ENCODE measurements at regions of chr19 and their contacts with region 1.

Region 1: DNA sequence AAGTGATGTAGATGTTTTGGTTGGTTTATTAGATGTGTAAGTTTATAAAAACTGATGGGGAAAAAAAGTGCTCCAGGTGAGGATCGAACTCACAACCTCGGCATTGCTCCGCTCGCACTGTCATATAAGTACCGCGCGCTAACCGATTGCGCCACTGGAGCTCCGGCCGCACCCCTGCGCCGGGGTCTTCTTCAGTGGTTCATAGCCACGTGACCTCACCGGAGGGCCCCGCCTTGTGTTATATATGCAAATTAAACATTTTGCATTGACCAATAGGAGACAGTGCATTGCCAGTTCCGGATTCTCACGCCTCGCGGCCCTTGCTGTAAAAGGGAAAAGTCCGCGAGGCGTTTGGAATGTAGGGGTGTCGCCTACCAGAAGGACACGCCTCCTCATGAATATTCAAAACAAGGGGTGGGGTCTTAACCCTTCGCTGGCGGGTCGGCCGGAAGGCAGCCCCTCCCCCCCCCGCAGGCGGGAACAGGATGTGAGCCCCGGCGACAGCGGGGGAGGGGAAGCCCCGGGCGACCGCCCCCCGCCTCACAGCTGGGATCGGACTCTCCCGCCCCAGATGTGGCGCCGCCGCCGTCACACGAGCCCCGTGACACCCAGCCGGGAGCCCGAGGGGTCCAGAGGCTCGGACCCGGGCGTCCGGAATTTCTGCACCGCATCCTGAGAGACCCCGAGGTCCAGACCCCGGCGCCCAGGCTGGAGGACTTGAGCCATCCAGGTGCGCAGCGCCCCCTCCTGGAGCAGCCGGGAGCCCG is at the start of gene PLEKHG2:
- DNase-seq: peak; percentile 95
- H3K4me3 ChIP-seq: peak within 1 kb of the TSS; percentile 92 to 96
- H3K27ac ChIP-seq: peak within 1 kb of the TSS; percentile 94 to 96
- H3K4me1 ChIP-seq: peaks cover 29 to 44% of the 10 kb centered on the region in 2 experiments; a peak in 3 of 4 replicates
- H3K27me3 ChIP-seq: no peaks in the 10 kb centered on the region
- CTCF ChIP-seq: peak; percentile 88
- EP300 ChIP-seq: 0 out of 4 replicates have a peak, but pooled peaks of 1 of the 2 experiments have one; percentile 42
- RAD21 ChIP-seq: peak; percentile 27; the same call in 1 of the 2 replicates
- polyA plus RNA-seq, gene PLEKHG2: 13.6 and 13.8 TPM in 2 replicates

Region 2: GRCh38 chr19:39264306-39265290 is 147.7 kb before region 1 on chr19:
- CTCF ChIA-PET with region 1: no interaction called
- POLR2A ChIA-PET with region 1: no interaction called
- DNase-seq: no peak
- H3K4me3 ChIP-seq: no peak overlapping the region
- H3K27ac ChIP-seq: no peak overlapping the region
- H3K4me1 ChIP-seq: no peaks in the 10 kb centered on the region
- H3K27me3 ChIP-seq: peaks cover 10% of the 10 kb centered on the region; the same call in 1 of the 2 replicates
- CTCF ChIP-seq: no peak
- EP300 ChIP-seq: no peak
- RAD21 ChIP-seq: no peak

Region 3: GRCh38 chr19:39282021-39282420 is 130.3 kb before region 1 on chr19:
- CTCF ChIA-PET with region 1: no interaction called
- POLR2A ChIA-PET with region 1: no interaction called
- DNase-seq: no peak
- H3K4me3 ChIP-seq: no peak overlapping the region
- H3K27ac ChIP-seq: no peak overlapping the region
- H3K4me1 ChIP-seq: no peaks in the 10 kb centered on the region
- H3K27me3 ChIP-seq: no peaks in the 10 kb centered on the region
- CTCF ChIP-seq: no peak
- EP300 ChIP-seq: no peak
- RAD21 ChIP-seq: no peak

Region 4: DNA sequence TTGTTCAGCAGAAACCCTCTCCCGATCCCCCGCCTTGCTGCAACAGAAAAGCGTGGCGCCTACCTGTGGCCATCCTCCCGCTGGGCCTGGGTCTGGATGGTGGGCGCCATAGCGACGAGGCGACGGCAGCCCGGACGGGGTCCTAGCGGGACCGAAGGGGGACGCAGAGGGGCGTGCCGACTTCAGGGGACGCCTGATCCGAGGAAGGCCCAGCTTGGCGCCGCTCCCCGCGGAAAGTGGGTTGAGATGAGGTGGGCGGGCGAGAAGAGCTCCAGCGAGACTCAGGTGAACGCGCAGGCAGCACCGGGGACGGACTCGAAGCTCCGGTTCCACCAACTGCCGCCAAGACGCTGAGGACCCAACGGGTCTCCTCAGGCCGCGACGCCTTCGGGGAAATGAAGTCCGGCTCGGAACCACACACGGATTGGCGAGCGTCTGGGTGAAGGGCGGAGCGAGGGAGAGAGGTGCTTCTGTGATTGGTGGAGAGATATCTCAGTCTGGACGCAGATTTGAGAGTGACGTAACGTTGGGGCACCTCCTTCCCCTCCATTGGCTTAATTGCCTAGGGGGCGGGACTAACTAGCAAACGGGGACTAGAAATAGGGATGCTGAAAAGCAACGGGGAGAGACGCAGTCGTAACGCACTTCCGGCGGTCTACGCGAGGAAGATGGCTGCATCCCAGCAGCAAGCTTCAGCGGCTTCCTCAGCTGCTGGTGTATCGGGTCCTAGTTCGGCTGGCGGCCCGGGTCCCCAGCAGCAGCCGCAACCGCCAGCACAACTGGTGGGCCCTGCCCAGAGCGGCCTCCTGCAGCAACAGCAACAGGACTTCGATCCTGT is 21.3 kb before region 1 on chr19 and contains the starts of genes MED29 and PAF1:
- CTCF ChIA-PET with region 1: interaction called, 53 read pairs
- POLR2A ChIA-PET with region 1: interaction called, 6 read pairs
- DNase-seq: peak; percentile 97
- H3K4me3 ChIP-seq: peak within 1 kb of the TSS; percentile 96 to 98
- H3K27ac ChIP-seq: peak within 1 kb of the TSS; percentile 86 to 97
- H3K4me1 ChIP-seq: peaks cover 5 to 17% of the 10 kb centered on the region in 2 experiments; a peak in 2 of 4 replicates
- H3K27me3 ChIP-seq: no peaks in the 10 kb centered on the region
- CTCF ChIP-seq: no peak
- EP300 ChIP-seq: no peak
- RAD21 ChIP-seq: no peak
- polyA plus RNA-seq, gene MED29: 32.0 and 33.1 TPM in 2 replicates
- polyA plus RNA-seq, gene PAF1: 57.6 and 65.3 TPM in 2 replicates

Region 5: DNA sequence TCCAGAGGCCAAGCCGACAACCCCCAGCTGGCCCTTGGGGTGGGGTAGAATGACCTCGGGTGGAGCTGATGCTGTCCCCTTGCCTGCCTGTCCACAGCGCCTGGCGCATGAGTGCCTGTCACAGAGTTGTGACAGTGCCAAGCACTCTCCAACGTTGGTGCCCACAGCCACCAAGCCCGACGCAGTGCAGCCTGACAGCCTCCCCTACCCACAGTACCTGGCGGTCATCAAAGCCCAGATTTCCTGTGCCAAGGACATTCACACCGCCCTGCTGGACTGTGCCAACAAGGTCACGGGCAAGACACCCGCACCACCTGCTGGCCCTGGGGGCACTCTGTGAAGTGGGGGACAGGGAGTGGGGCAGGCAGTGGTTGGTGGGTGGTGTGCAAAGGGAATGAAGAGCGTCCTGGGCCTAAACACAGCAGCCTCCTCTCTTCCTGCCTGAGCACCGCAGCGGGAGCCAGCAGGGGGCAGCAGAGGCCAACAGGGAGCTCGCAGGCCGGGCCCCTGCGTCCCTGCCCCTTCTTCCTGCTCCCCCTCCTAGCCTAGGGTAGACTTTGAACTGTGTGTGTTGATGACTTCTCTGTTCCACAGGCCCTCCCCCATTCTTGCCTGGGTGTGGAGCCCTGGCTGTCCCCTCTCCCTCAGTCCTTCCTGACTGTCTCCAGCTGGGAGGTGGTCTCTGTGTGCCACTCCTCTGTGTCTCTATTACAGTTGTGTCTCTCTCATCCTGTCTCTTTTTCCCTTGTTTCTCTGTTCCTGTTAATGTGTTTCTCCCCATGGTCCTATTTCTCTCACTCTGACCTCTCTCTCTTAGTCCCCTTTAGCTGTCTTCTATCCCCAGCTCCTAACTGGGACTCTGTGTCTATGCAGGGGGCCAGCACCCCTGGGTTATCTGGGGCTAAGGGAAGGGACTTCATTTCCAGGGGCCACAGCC is 14.7 kb before region 1 on chr19:
- CTCF ChIA-PET with region 1: interaction called, 106 read pairs
- POLR2A ChIA-PET with region 1: interaction called, 4 read pairs
- DNase-seq: peak; percentile 92
- H3K4me3 ChIP-seq: peak overlapping the region in 1 of 2 experiments; percentile 35; a peak in 1 of 4 replicates
- H3K27ac ChIP-seq: peak overlapping the region in 1 of 2 experiments; percentile 77; a peak in 3 of 4 replicates
- H3K4me1 ChIP-seq: peaks cover 12 to 24% of the 10 kb centered on the region in 2 experiments; a peak in 3 of 4 replicates
- H3K27me3 ChIP-seq: no peaks in the 10 kb centered on the region
- CTCF ChIP-seq: peak; percentile 91
- EP300 ChIP-seq: no peak
- RAD21 ChIP-seq: peak; percentile 90

Region 6: GRCh38 chr19:39428283-39429112 is 16.2 kb after region 1 on chr19:
- CTCF ChIA-PET with region 1: interaction called, 18 read pairs
- POLR2A ChIA-PET with region 1: interaction called, 5 read pairs
- DNase-seq: no peak
- H3K4me3 ChIP-seq: no peak overlapping the region
- H3K27ac ChIP-seq: peak overlapping the region; percentile 54 to 92; a peak in 3 of 4 replicates
- H3K4me1 ChIP-seq: peaks cover 8 to 21% of the 10 kb centered on the region in 2 experiments; a peak in 3 of 4 replicates
- H3K27me3 ChIP-seq: no peaks in the 10 kb centered on the region
- CTCF ChIP-seq: no peak
- EP300 ChIP-seq: no peak
- RAD21 ChIP-seq: no peak

Measured in SK-N-SH (cell line).